ENCODE measurements at regions of chr2 and their contacts with region 1.

Region 1: GRCh38 chr2:149040451-149040850 is 2.0 kb downstream of the LYPD6B start:
- DNase-seq: peak in 1 of 2 experiments; percentile 82
- H3K4me3 ChIP-seq: no peak overlapping the region
- H3K4me1 ChIP-seq: 0 out of 2 replicates have a peak, but pooled peaks cover 2% of the 10 kb centered on the region
- H3K27me3 ChIP-seq: peaks cover 12% of the 10 kb centered on the region

Region 2: GRCh38 chr2:149313512-149313972 is 273.1 kb after region 1 on chr2:
- in situ Hi-C with region 1: loop called (anchors 25 kb)
- DNase-seq: peak; percentile 80 to 83
- H3K4me3 ChIP-seq: no peak overlapping the region
- H3K4me1 ChIP-seq: peaks cover 27% of the 10 kb centered on the region
- H3K27me3 ChIP-seq: no peaks in the 10 kb centered on the region

Region 3: GRCh38 chr2:149365826-149366583 is 325.6 kb after region 1 on chr2:
- in situ Hi-C with region 1: no loop called
- DNase-seq: no peak
- H3K4me3 ChIP-seq: no peak overlapping the region
- H3K4me1 ChIP-seq: no peaks in the 10 kb centered on the region
- H3K27me3 ChIP-seq: no peaks in the 10 kb centered on the region

Region 4: DNA sequence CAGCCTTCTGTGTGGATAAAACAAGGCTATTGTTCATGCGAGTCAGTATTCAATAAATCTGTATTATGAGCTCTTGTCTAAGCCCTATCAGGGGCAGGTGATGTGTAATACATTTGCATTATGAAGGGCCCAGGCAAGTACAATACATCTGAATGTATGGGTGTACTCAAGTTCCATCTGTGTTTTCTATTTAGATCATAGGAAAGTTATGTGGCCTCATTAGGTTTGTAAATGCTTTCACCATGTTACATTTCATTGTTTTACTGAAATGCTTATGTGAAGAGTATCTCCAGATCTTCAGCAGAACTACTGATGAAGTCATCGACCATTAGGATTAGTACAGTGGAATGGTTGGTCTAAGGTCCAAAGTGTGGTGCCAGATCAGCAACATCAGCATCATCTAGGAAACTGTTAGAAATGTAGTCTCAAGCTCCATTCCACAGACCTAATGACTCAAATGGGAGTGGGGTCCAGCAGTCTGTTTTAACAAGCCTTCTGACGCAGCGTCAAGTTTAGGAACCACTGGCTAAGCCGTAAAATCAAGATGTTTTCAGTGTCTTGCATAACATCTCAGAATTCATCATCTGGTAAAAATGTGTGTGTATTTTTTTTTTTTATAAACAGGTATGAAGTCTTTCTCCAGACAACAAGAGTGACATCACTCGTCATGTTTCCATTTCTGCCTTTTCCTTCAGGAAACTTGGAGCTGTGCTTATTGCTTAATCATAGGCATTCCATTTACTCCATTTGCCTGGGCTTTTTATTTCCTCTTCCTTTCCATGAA is 370.4 kb after region 1 on chr2:
- in situ Hi-C with region 1: no loop called
- DNase-seq: peak; percentile 61 to 95
- H3K4me3 ChIP-seq: no peak overlapping the region
- H3K4me1 ChIP-seq: peaks cover 17% of the 10 kb centered on the region
- H3K27me3 ChIP-seq: no peaks in the 10 kb centered on the region